ENCODE measurements at regions of chrX and their contacts with region 1.

Region 1: DNA sequence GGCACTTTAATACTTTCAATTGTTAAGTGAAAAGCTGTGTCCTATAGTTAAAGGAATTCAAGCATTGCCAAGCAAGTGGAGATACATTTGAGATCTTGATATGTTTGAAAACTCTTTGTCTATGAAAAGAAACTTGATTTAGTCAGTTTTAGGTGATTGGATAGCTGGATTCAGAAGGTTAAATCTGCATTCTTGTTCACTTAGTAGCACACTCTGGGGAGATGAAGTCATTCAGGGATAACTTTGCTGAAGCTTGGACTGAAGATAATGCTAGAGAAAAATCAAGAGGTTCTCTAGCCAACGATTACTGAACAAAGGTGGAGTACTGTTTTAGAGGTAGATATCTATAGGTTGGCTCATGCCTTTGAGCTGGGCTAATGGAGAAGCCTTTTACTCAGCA is 90.6 kb downstream of the DCAF8L2 start:
- DNase-seq: no peak
- ATAC-seq: no peak
- H3K4me3 ChIP-seq: no peak overlapping the region
- H3K27ac ChIP-seq: no peak overlapping the region
- H3K4me1 ChIP-seq: no peaks in the 10 kb centered on the region
- H3K27me3 ChIP-seq: no peaks in the 10 kb centered on the region
- CTCF ChIP-seq: no peak
- POLR2A ChIP-seq: no peak

Region 2: DNA sequence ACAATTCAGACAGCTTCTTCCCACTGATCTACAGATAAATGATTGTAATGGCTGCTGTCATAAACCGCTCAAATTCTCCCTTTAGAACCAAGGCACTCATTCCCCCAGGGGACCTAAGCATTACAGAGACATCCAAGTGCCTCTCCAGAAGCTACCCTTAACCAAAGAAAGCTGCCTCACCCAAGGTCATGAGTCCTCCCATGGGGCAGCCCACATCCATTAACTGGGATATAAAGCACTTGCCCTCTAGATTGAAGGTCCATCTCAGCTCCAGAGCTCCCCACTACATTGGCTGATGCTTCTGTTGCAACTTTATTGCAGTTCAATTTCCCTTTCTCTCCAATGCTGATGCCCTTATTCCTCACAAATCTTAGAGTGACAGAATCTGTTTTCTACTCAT is 131.0 kb before region 1 on chrX:
- intact Hi-C with region 1: loop called in 3 of 10 experiments (anchors 5 to 10 kb)
- DNase-seq: no peak
- ATAC-seq: no peak
- H3K4me3 ChIP-seq: no peak overlapping the region
- H3K27ac ChIP-seq: no peak overlapping the region
- H3K4me1 ChIP-seq: no peaks in the 10 kb centered on the region
- H3K27me3 ChIP-seq: no peaks in the 10 kb centered on the region
- CTCF ChIP-seq: no peak
- POLR2A ChIP-seq: no peak

Region 3: DNA sequence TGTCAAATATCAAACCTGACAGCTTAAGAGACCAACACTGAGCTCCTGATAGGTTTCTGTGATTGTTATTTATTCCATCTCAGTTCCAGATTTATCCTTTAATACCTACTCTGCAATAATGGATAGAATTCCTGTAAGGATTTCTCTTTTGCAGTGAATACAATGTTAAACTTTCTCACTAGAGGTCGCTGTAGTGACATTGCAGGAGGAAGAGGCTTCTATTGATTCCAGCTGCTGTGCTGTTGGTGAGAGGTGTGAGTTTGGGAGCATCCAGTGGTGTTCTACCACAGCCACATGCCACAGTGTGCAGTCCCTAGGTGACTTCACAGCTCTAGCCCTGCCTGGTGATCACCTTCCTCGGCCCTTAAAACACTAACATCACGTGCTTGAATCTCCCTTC is 125.2 kb before region 1 on chrX:
- intact Hi-C with region 1: loop called in 6 of 10 experiments (anchors 5 to 10 kb)
- DNase-seq: no peak
- ATAC-seq: peak in 1 of 4 donors; percentile 24
- H3K4me3 ChIP-seq: no peak overlapping the region
- H3K27ac ChIP-seq: no peak overlapping the region
- H3K4me1 ChIP-seq: no peaks in the 10 kb centered on the region
- H3K27me3 ChIP-seq: no peaks in the 10 kb centered on the region
- CTCF ChIP-seq: peak; percentile 18 to 55 (median 39)
- POLR2A ChIP-seq: no peak

Region 4: DNA sequence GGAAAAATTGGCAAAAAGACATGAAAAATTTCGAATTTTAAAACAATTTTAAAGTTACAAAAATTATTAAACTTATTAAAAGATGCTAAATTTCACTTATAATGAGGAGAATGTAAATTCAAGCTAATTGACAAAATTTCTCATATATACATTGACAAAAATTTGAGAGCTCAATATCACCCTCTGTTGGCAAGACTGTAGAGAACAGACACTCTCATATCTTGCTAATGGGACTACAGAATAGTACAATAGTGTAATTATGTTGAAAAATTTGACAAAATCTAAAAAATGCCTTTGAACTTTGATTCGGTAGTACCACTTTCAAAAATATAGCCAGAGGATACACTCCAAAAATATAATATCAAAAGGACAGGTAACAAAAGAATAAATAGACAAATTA is 60.8 kb before region 1 on chrX:
- intact Hi-C with region 1: no loop called
- DNase-seq: no peak
- ATAC-seq: no peak
- H3K4me3 ChIP-seq: no peak overlapping the region
- H3K27ac ChIP-seq: no peak overlapping the region
- H3K4me1 ChIP-seq: no peaks in the 10 kb centered on the region
- H3K27me3 ChIP-seq: no peaks in the 10 kb centered on the region
- CTCF ChIP-seq: peak in 6 of 12 donors; percentile 19 to 29 (median 24)
- POLR2A ChIP-seq: no peak

Measured in heart left ventricle (tissue), 16 donors.